H1 (cell line): ENCODE measurements at regions of chr1 and their contacts with region 1.

Region 1: GRCh38 chr1:44652445-44653106 is 21.7 kb downstream of the TMEM53 start:
- DNase-seq: peak; percentile 69 to 94
- H3K4me3 ChIP-seq: no peak overlapping the region
- H3K27ac ChIP-seq: 0 out of 2 replicates have a peak overlapping the region, but pooled peaks have one; percentile 20
- H3K4me1 ChIP-seq: peaks cover 0 to 17% (median 9%) of the 10 kb centered on the region in 4 experiments; a peak in 5 of 7 replicates
- H3K27me3 ChIP-seq: no peaks in the 10 kb centered on the region
- CTCF ChIP-seq: peak; percentile 94 to 100 (median 99)
- EP300 ChIP-seq: no peak
- POLR2A ChIP-seq: no peak
- RAD21 ChIP-seq: peak; percentile 93 to 95

Region 2: DNA sequence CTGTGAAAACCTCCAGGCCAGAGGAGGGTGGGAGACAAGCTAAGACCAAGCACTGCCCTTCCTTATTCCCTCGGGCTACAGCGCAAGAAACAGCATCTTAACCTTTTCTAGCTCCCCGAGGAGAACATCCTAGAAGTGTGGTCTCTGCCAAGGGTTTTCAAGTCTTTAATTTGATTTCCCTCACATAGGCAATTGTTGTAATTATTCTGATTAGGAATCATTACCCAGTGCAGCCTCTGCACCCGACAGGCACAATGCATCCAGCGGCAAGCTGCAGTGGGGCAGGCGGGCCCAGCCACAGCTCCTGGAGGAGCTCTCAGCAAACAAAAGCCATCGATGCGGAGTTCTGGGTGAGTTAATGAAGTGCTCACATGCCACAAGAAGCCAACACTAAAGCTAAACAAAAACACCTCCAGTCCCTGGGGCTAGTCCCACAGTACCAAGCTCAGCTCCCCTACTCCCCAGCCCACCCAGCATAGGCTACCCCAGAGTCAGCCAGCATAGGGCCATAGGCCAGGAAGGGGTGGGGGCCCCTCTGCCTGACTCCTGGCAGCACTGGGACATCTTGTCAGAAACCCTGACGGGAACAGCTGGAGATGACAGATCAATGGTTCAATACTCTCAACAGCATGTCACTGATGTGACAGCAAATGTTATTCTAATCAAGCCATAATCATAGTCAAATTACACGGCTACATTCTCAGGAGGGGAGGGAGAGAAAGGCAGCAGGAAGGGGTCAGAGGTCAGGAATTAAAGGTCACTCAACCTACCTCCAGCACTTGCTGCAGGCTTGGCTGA is 340.0 kb before region 1 on chr1:
- CTCF ChIA-PET with region 1: interaction called, 10 read pairs
- POLR2A ChIA-PET with region 1: no interaction called
- DNase-seq: no peak
- H3K4me3 ChIP-seq: no peak overlapping the region
- H3K27ac ChIP-seq: no peak overlapping the region
- H3K4me1 ChIP-seq: peaks cover 0 to 4% (median 3%) of the 10 kb centered on the region in 4 experiments; a peak in 2 of 7 replicates
- H3K27me3 ChIP-seq: peaks cover 0 to under 1% (median 0%) of the 10 kb centered on the region in 4 experiments; a peak in 1 of 7 replicates
- CTCF ChIP-seq: no peak
- EP300 ChIP-seq: no peak
- POLR2A ChIP-seq: no peak
- RAD21 ChIP-seq: no peak

Region 3: GRCh38 chr1:44476891-44477290 is 175.7 kb before region 1 on chr1:
- CTCF ChIA-PET with region 1: no interaction called
- POLR2A ChIA-PET with region 1: no interaction called
- DNase-seq: no peak
- H3K4me3 ChIP-seq: no peak overlapping the region
- H3K27ac ChIP-seq: no peak overlapping the region
- H3K4me1 ChIP-seq: peaks cover 6 to 19% (median 11%) of the 10 kb centered on the region in 4 experiments
- H3K27me3 ChIP-seq: no peaks in the 10 kb centered on the region
- CTCF ChIP-seq: no peak
- EP300 ChIP-seq: no peak
- POLR2A ChIP-seq: no peak
- RAD21 ChIP-seq: no peak

Region 4: DNA sequence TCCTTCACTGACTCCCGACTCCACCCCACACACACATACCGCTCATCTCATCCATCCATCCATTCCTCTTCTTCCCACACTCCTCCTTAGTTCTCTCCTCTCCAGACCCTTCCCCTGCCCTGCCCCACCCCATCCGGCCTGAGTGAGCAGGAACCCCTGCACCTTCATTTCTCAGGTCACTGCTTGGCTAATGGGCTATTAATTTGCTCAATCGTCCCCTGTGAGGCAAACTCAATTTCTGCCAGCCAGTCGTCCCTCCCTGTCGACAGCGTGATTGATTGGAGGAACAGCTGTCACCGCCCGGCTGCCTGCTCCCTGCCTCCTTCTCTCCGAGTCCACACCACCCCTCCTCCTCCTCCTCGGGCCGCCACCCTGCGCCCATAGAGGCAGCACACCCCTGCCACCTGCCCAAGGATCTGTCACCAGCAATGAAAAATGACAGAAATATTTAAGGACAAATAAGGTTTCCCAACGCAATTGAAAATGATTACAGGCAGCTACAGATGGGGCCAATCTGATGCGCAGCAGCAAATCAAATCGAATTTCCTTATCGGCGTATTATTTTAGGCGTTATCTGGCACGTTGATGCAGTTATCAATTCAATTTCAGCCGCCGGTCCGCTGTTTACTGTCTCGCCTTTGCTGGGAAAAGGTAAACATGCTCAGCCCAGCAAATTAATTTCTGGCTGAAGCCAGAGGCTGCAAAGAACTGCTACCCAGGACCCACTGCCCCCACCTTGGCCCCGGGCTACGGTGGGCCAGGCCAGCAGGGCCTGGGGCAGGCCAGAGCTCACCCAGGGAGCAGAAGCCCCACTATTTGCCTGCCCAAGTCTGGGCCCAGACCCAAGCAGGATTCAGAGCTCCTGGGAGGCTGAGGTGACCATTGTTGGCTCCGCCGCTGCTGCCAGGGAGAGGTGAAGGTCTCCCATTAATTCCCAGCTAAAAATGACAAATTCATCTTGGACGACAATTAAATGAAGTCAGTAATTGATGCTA is 49.6 kb before region 1 on chr1:
- CTCF ChIA-PET with region 1: interaction called, 129 read pairs
- POLR2A ChIA-PET with region 1: no interaction called
- DNase-seq: no peak
- H3K4me3 ChIP-seq: no peak overlapping the region
- H3K27ac ChIP-seq: no peak overlapping the region
- H3K4me1 ChIP-seq: no peaks in the 10 kb centered on the region; a peak in 2 of 7 replicates
- H3K27me3 ChIP-seq: no peaks in the 10 kb centered on the region; a peak in 1 of 7 replicates
- CTCF ChIP-seq: no peak
- EP300 ChIP-seq: no peak
- POLR2A ChIP-seq: no peak
- RAD21 ChIP-seq: no peak

Region 5: GRCh38 chr1:44631647-44632539 is 20.7 kb before region 1 on chr1:
- CTCF ChIA-PET with region 1: interaction called, 197 read pairs
- POLR2A ChIA-PET with region 1: interaction called, 633 read pairs
- DNase-seq: peak in 1 of 2 experiments; percentile 91
- H3K4me3 ChIP-seq: peak overlapping the region; percentile 73 to 81 (median 78)
- H3K27ac ChIP-seq: peak overlapping the region; percentile 96
- H3K4me1 ChIP-seq: peaks cover 0 to 11% (median 4%) of the 10 kb centered on the region in 4 experiments; a peak in 6 of 7 replicates
- H3K27me3 ChIP-seq: no peaks in the 10 kb centered on the region
- CTCF ChIP-seq: no peak
- EP300 ChIP-seq: peak in 1 of 2 experiments; percentile 36; a peak in 1 of 3 replicates
- POLR2A ChIP-seq: peak; percentile 61 to 97
- RAD21 ChIP-seq: no peak

Region 6: DNA sequence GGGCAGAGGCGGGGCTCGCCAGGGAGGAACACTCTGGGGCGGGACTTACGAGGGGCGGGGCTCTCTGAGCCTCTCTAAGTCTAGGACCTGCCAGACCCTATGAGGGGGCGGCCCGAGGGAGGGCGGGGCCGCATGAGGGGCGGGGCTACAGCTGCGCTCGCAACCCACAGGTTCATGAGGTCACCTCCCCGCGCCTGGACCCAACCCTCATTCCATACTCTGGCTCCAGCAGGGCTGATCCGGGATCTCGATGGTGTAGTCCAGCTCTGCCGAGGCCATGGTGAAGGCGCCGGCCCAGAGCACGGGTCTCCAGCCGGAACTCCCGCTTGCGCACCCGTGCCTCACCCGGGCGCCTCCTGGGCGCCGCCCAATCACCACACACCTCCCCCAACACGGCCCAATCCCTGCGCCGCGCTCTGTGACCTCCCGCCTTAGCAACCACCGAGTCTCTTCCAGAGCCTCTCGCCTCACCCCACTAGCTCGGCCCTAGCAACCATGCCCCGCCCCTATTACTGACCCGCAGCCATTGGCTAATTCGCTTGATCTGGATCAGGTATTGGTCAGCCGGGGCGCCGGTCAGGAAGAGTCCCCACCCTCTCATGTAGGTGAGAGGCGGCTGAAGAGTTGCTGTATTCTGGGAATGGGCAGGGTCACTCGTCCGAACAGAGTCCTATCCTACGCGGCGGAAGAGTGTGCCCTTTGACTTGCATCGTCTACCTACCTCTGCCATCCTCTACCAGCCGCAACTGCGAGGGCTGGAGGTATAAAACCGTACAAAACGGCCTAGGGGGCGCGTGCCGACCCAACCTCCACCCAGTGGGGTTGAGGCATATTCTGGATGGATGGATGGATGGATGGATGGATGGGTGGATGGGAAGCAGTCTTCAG is 21.8 kb after region 1 on chr1 and contains the starts of genes ARMH1 and TMEM53:
- CTCF ChIA-PET with region 1: interaction called, 29 read pairs
- POLR2A ChIA-PET with region 1: interaction called, 5 read pairs
- DNase-seq: peak; percentile 97 to 98
- H3K4me3 ChIP-seq: peak within 1 kb of the TSS; percentile 58 to 93 (median 75)
- H3K27ac ChIP-seq: peak within 1 kb of the TSS; percentile 80
- H3K4me1 ChIP-seq: peaks cover 4 to 11% (median 6%) of the 10 kb centered on the region in 4 experiments; a peak in 6 of 7 replicates
- H3K27me3 ChIP-seq: no peaks in the 10 kb centered on the region; a peak in 1 of 7 replicates
- CTCF ChIP-seq: no peak
- EP300 ChIP-seq: no peak
- POLR2A ChIP-seq: peak; percentile 82 to 89
- RAD21 ChIP-seq: no peak
- total RNA-seq, gene ARMH1: 0.63 and 0.82 TPM in 2 replicates
- total RNA-seq, gene TMEM53: 6.7 and 9.5 TPM in 2 replicates